ENCODE measurements at regions of chr3 and their contacts with region 1.

Region 1: GRCh38 chr3:170848292-170848917 is 21.6 kb downstream of the RPL22L1 start:
- DNase-seq: peak; percentile 20
- H3K4me3 Mint-ChIP-seq: no peak overlapping the region
- H3K27ac Mint-ChIP-seq: no peak overlapping the region
- H3K4me1 Mint-ChIP-seq: no peaks in the 10 kb centered on the region
- H3K27me3 Mint-ChIP-seq: peaks cover 16% of the 10 kb centered on the region
- CTCF ChIP-seq: peak; percentile 56

Region 2: DNA sequence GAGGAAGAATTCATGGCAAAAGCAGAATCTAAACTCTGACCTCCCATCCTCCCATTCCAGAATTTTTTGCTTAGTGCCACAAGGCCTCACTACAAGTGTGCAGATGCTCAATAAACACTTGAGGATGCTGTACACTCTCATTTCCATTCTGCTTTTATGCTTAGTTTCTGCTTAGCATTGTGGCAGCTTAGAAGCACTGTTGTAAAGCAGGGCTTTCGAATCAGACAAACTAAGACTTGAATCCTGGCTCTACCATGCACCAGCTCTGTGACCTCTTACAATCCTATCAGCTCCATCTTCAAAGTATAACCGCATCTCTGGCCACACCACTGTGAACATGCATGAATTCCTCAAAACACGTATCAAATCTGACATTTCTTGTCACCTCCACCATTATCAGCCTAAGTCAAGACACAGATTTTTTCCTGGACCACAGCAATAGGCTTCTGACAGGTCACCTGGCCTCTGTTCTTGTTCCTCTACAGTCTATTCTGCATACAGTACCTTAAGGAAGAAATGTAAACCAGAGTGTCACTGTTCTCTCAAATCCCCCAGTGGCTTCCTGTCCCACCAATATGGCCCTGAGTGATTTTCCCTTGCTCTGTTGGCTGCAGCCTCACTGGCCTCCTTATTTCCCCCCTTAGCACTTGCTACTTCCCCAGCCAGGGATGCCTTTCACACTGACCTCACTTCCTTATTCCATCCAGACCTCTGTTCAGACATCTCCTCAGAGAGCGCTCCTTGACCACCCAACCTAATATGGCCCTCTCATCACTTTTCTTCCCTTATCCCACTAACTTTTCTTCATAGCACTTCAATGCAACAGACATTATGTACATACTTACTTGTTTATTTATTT is 658.8 kb before region 1 on chr3:
- CTCF ChIA-PET with region 1: interaction called, 3 read pairs
- POLR2A ChIA-PET with region 1: interaction called, 4 read pairs
- intact Hi-C with region 1: loop called (anchors 1 kb)
- DNase-seq: no peak
- H3K4me3 Mint-ChIP-seq: no peak overlapping the region
- H3K27ac Mint-ChIP-seq: no peak overlapping the region
- H3K4me1 Mint-ChIP-seq: no peaks in the 10 kb centered on the region
- H3K27me3 Mint-ChIP-seq: no peaks in the 10 kb centered on the region
- CTCF ChIP-seq: no peak

Region 3: DNA sequence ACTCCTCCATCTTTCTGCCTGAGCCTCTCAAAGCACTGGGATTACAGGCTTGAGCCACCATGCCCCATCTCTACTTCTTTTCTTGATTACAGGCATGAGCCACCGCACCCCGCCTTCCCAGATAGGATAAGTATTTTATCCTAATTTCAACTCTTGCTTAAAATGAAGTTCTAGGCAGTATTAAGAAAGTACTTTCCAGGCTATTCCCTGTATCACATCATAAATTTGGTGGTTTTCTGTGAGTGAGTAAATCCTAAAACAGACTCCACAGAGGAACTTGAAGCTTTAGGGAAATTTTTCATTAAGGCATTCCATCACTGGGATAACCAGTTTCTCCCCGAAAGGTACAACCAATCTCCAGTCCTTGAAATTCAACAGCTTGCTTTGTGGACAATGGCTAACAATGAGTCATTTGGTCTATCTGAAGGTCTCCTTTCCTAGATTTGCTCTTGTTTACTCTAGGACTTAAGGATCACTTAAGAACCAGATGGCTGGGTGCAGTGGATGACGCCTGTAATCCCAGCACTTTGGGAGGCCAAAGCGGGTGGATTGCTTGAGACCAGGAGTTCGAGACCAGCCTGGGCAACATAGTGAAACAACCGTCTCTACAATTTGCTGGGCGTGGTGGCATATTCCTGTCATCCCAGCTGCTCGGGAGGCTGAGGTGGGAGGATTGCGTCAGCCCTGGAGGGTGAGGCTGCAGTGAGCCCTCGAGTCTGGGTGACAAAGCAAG is 540.6 kb before region 1 on chr3:
- CTCF ChIA-PET with region 1: interaction called, 11 read pairs
- POLR2A ChIA-PET with region 1: no interaction called
- intact Hi-C with region 1: loop called (anchors 10 kb)
- DNase-seq: peak; percentile 32
- H3K4me3 Mint-ChIP-seq: no peak overlapping the region
- H3K27ac Mint-ChIP-seq: no peak overlapping the region
- H3K4me1 Mint-ChIP-seq: no peaks in the 10 kb centered on the region
- H3K27me3 Mint-ChIP-seq: no peaks in the 10 kb centered on the region
- CTCF ChIP-seq: no peak

Region 4: DNA sequence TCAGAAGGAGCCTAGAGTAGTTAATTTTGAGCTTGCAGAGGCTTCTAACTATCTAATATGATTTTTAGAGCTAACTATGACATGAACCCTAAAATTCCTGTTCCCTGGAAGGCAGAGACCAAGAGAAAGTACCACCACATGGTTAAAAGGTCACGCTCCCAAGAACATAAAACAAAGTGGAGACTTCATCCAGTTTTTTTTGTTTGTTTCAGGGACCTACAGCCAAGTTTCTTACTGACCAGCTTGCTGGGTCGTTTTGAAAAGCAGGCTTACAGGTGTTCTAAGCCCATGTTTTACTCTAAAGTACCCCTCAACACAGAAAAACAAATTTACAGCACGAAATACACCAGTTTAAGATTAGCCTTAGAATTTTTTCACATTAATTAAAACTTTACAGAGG is 530.5 kb before region 1 on chr3:
- CTCF ChIA-PET with region 1: interaction called, 3 read pairs
- POLR2A ChIA-PET with region 1: no interaction called
- intact Hi-C with region 1: loop called (anchors 10 kb)
- DNase-seq: no peak
- H3K4me3 Mint-ChIP-seq: no peak overlapping the region
- H3K27ac Mint-ChIP-seq: no peak overlapping the region
- H3K4me1 Mint-ChIP-seq: no peaks in the 10 kb centered on the region
- H3K27me3 Mint-ChIP-seq: no peaks in the 10 kb centered on the region
- CTCF ChIP-seq: no peak

Region 5: GRCh38 chr3:170634663-170635399 is 213.6 kb before region 1 on chr3:
- CTCF ChIA-PET with region 1: no interaction called
- POLR2A ChIA-PET with region 1: no interaction called
- intact Hi-C with region 1: no loop called
- DNase-seq: no peak
- H3K4me3 Mint-ChIP-seq: no peak overlapping the region
- H3K27ac Mint-ChIP-seq: no peak overlapping the region
- H3K4me1 Mint-ChIP-seq: no peaks in the 10 kb centered on the region
- H3K27me3 Mint-ChIP-seq: no peaks in the 10 kb centered on the region
- CTCF ChIP-seq: no peak

Region 6: DNA sequence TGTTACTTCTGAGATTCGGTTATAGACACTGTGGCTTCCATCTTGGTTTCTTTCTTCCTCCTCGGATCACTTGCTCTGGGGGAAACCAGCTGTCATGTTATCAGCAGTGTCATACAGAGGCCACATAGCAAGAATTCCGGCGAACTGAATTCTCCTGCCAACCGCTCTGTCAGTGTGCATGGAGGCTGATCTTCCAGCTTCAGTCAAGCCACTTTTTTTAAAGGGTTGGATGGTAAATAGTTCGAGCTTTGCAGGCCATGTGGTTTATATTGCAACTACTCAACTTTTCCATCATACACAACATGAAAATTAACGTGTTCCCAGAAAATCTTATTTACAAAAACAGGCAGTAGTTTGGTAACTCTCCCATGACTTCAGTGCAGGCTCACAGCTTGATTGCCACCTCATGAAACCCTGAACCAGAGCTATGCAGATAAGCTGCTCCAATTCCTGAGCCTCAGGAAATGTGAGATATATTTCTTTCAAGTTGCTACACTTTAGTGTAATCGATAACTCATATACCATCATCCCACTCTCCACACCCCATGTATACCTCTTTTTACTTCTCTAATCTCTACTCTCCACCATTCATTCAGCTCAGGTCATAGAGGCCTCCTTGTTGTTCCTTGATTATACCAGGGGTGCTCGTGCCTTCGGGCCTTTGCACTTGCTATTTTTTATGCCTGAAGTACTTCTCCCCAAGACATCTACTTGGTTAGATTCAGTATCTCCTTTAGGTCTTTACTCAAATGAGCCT is 14.4 kb after region 1 on chr3:
- CTCF ChIA-PET with region 1: interaction called, 31 read pairs
- POLR2A ChIA-PET with region 1: interaction called, 5 read pairs
- intact Hi-C with region 1: no loop called
- DNase-seq: no peak
- H3K4me3 Mint-ChIP-seq: no peak overlapping the region
- H3K27ac Mint-ChIP-seq: no peak overlapping the region
- H3K4me1 Mint-ChIP-seq: peaks cover 15% of the 10 kb centered on the region
- H3K27me3 Mint-ChIP-seq: no peaks in the 10 kb centered on the region
- CTCF ChIP-seq: no peak

Measured in MCF 10A (cell line).